Cardiac septum (tissue), 1 donor: ENCODE measurements at regions of chr19 and their contacts with region 1.

Region 1: DNA sequence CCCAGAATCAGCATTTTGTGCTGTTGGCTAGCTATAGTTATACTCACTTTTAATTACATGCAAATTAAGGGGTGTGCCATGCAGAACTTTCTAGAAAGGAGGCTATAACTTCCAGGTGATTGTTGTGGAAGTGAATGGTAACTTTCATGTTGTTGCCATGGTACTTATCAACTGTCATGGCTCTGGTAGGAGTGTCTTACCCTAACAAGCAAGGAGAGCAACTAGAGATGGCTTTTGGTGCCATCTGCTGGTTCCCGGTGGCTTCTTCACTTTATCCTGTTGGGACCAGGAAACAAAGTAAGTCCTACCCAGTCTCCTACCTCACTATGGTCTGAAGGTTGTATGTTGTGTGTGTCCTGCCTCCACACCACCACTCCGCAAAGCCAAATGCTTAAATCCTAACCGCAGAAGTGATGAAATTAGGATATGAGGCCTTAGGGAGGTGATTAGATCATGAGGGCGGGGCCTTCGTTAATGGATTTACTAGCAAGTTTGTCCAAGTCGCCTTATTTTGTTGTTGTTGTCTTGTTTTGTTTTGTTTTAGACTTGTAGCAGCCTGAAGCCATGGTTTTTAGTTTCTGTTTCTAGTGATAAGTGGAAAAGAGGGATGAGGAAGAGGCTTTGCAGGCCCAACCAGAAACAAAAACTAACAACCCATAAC is 22.6 kb downstream of the FBXL12 start:
- DNase-seq: peak; percentile 86

Region 2: GRCh38 chr19:9205501-9206113 is 590.6 kb before region 1 on chr19:
- intact Hi-C with region 1: loop called (anchors 5 kb)
- DNase-seq: peak; percentile 77

Region 3: GRCh38 chr19:9435279-9436268 is 360.7 kb before region 1 on chr19 and contains the start of gene ZNF266:
- intact Hi-C with region 1: loop called (anchors 10 kb)
- DNase-seq: peak; percentile 94
- total RNA-seq, gene ZNF266: 7.3 TPM

Region 4: GRCh38 chr19:9627856-9628255 is 168.4 kb before region 1 on chr19:
- intact Hi-C with region 1: loop called (anchors 2 kb)
- DNase-seq: no peak

Region 5: DNA sequence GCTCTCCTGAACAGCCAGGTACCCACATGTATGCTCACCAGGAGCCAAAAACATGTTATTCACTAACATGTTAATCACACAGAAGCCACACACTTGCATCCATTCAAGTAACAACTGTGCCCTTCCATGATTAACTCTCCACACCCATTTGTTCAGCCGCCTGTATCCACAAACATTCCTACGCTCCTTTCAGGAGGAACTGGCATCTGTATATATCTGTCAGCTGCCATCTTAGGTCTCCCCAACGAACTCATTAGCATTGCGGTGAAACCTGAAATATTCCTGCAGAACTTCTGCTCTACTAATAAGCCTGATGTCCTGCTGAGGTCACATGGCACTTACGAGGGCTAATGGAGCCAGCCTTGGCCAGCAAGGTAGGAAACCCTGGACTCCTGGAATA is 107.1 kb after region 1 on chr19:
- intact Hi-C with region 1: no loop called
- DNase-seq: no peak